ENCODE measurements at regions of chr5 and their contacts with region 1.

Region 1: DNA sequence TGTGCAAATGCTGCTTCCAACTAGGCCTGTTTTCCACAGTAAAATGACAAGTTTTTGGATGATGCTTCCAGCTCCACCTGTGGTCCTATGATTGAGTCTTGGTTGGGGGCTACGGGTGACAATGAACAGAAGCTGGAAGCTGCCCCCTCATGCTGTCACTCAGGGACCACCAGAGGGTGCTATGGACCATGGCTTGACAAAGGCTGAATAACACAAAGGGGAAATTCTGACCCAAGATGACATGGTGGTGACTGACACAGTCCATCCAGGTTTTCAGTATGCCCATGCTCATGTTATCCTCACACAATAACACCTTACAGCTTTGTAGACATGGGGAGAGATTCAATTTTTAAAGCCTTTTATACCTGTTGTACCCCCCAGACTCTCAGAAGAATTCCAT is 23.9 kb upstream of the SAP30L start:
- DNase-seq: peak; percentile 53
- ATAC-seq: peak; percentile 93
- H3K4me3 ChIP-seq: no peak overlapping the region
- H3K27ac ChIP-seq: no peak overlapping the region
- H3K4me1 ChIP-seq: no peaks in the 10 kb centered on the region
- H3K27me3 ChIP-seq: no peaks in the 10 kb centered on the region
- CTCF ChIP-seq: peak; percentile 75
- EP300 ChIP-seq: no peak
- POLR2A ChIP-seq: no peak
- RAD21 ChIP-seq: peak; percentile 62; the same call in 1 of the 2 replicates

Region 2: DNA sequence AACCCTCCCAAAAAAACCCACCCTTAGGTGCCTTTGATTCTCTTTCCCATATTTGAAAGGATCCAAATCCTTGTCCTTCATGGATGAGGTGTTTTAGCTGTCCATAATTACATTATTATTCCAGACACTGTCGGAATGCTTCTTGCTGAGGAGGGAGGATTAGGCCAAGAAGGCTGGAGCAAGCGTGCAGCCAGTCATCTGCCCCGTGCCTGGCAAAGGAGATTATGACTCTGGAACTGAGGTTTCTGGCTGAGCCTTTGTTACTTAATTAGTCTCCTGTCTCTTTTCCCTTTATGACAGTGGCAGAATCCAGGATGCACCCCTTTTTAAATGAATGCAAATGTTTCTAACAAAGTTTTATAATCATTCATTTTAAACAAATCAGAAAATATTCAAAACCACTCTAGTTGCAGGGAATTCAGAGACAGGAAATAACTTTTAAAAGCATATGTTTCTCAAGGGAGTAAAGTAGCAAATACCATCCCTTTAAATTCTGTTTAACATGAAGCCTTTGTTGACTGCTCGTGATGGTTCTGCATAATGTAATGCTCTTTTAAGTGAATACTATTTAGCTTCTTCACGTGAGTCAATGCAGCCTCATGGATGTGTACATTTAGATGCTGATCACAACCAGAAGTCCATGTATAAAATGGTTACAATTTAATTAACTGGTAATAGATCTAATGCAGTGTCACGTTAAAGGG is 161.5 kb before region 1 on chr5:
- CTCF ChIA-PET with region 1: no interaction called
- POLR2A ChIA-PET with region 1: no interaction called
- in situ Hi-C with region 1: no loop called
- intact Hi-C with region 1: no loop called
- DNase-seq: no peak
- ATAC-seq: no peak
- H3K4me3 ChIP-seq: no peak overlapping the region
- H3K27ac ChIP-seq: no peak overlapping the region
- H3K4me1 ChIP-seq: peaks cover 22% of the 10 kb centered on the region
- H3K27me3 ChIP-seq: no peaks in the 10 kb centered on the region
- CTCF ChIP-seq: no peak
- EP300 ChIP-seq: no peak
- POLR2A ChIP-seq: no peak
- RAD21 ChIP-seq: no peak

Region 3: GRCh38 chr5:154445422-154446182 is 23.7 kb after region 1 on chr5 and contains the start of gene SAP30L:
- CTCF ChIA-PET with region 1: no interaction called
- POLR2A ChIA-PET with region 1: interaction called, 4 read pairs
- in situ Hi-C with region 1: no loop called
- intact Hi-C with region 1: loop called (anchors 2 kb)
- DNase-seq: peak; percentile 89
- ATAC-seq: peak; percentile 93
- H3K4me3 ChIP-seq: peak within 1 kb of the TSS; percentile 81 to 97 (median 94)
- H3K27ac ChIP-seq: peak within 1 kb of the TSS; percentile 72
- H3K4me1 ChIP-seq: peaks cover 34% of the 10 kb centered on the region
- H3K27me3 ChIP-seq: no peaks in the 10 kb centered on the region
- CTCF ChIP-seq: no peak
- EP300 ChIP-seq: no peak
- POLR2A ChIP-seq: peak; percentile 71 to 82
- RAD21 ChIP-seq: no peak
- total RNA-seq, gene SAP30L: 35.1 and 37.2 TPM in 2 replicates

Region 4: GRCh38 chr5:154461531-154461930 is 39.7 kb after region 1 on chr5:
- CTCF ChIA-PET with region 1: no interaction called
- POLR2A ChIA-PET with region 1: no interaction called
- in situ Hi-C with region 1: no loop called
- intact Hi-C with region 1: loop called (anchors 1 kb)
- DNase-seq: no peak
- ATAC-seq: peak; percentile 75
- H3K4me3 ChIP-seq: no peak overlapping the region
- H3K27ac ChIP-seq: no peak overlapping the region
- H3K4me1 ChIP-seq: peaks cover 31% of the 10 kb centered on the region
- H3K27me3 ChIP-seq: no peaks in the 10 kb centered on the region; a peak in 1 of 5 replicates
- CTCF ChIP-seq: no peak; the same call in 1 of the 2 replicates
- EP300 ChIP-seq: no peak
- POLR2A ChIP-seq: no peak
- RAD21 ChIP-seq: peak; percentile 19; the same call in 1 of the 2 replicates

Region 5: DNA sequence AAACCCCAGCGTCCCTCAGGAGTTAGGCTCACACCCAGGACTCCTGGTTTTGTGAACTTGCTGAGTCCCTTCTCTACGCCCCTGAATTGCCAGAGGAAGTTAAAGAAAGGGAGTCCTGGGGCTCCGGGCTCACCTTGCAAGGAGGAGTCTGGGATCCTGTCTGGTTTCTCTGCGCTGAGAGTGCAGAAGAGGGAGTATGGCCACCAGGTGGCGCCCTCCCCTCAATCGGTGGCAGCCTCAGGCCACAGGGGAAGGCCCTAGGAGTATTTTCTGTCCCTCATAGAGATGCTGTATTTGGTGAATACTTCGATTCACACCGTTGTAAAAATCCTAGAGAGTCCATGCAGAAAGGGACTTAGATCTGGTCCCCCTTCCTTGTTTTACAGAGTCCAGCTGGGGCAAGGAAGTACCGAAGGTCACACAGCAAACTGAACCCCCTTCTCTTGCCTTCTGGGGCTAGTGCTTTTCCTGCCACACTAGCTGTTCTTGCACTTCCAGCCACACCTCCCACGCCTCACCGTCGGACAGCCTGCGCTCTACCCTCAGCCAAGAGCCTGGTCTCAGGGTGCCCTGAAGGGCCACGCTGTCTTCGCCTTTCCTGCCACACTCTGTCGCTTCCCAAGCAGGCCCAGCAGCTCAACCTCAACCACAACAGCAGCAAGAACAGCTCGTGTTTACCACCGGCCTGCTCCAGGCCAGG is 45.9 kb after region 1 on chr5:
- CTCF ChIA-PET with region 1: interaction called, 3 read pairs
- POLR2A ChIA-PET with region 1: no interaction called
- in situ Hi-C with region 1: no loop called
- intact Hi-C with region 1: loop called (anchors 2 kb)
- DNase-seq: peak; percentile 31
- ATAC-seq: peak; percentile 96
- H3K4me3 ChIP-seq: peak overlapping the region in 1 of 3 experiments; percentile 23; a peak in 1 of 6 replicates
- H3K27ac ChIP-seq: no peak overlapping the region
- H3K4me1 ChIP-seq: peaks cover 54% of the 10 kb centered on the region
- H3K27me3 ChIP-seq: peaks cover 2 to 29% of the 10 kb centered on the region in 2 experiments; a peak in 3 of 5 replicates
- CTCF ChIP-seq: peak; percentile 88
- EP300 ChIP-seq: no peak
- POLR2A ChIP-seq: no peak
- RAD21 ChIP-seq: peak; percentile 67; the same call in 1 of the 2 replicates

Region 6: GRCh38 chr5:154610321-154611154 is 188.7 kb after region 1 on chr5:
- CTCF ChIA-PET with region 1: interaction called, 8 read pairs
- POLR2A ChIA-PET with region 1: no interaction called
- in situ Hi-C with region 1: no loop called
- intact Hi-C with region 1: loop called (anchors 2 kb)
- DNase-seq: peak; percentile 55
- ATAC-seq: peak; percentile 98
- H3K4me3 ChIP-seq: peak overlapping the region in 2 of 3 experiments; percentile 10 to 59; a peak in 3 of 6 replicates
- H3K27ac ChIP-seq: no peak overlapping the region
- H3K4me1 ChIP-seq: peaks cover 12% of the 10 kb centered on the region
- H3K27me3 ChIP-seq: peaks cover 1 to 56% of the 10 kb centered on the region in 2 experiments; a peak in 4 of 5 replicates
- CTCF ChIP-seq: peak; percentile 98
- EP300 ChIP-seq: no peak
- POLR2A ChIP-seq: no peak
- RAD21 ChIP-seq: peak; percentile 96

Measured in HepG2 (cell line).